Panc1 (cell line): ENCODE measurements at regions of chr4 and their contacts with region 1.

Region 1: DNA sequence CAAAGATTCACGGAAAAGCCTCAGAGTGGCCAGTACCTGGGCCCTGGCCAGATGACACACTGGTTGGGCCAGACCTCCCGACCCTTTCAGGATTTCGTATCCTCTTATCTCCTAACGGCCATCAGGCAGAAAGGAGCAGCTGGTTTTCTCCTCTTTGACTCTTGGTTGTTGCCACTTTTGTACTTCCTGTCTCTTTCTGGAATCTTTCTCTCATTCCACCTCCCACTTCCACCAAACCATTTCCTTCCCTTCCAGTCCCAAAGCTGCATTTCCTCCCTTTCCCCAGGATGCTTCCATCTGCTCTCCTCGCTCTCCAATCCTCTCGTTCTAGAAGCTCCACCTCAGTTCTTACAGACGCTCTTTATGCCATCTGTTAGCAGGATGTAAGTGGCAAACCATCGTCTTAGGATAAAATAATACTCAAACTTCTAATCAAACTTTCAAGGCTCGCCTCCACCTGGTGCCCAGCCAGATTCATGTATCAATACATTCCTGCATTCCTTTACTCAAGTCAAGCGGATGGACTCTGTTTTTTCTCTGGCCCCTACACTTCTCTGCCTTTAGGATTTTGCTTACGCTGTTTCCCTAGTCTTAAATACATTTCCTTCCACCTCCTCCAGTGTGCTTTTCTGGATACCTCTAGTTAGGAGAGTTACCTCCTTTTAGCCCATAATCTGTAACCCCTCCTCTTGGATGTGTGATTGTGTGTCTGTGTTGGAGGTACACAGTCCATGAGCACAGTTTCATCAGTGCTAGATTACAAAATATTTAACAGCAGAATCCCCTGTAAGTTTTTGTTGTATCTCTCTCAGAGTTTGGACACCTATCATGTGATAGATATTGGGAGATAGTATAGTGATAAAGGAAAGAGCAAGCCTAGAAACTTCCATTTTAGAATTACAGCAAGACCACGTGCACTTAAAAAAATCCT is 70.4 kb downstream of the LDB2 start:
- DNase-seq: no peak
- ATAC-seq: no peak
- H3K4me3 ChIP-seq: no peak overlapping the region
- H3K27ac ChIP-seq: no peak overlapping the region
- H3K4me1 ChIP-seq: no peaks in the 10 kb centered on the region
- H3K27me3 ChIP-seq: no peaks in the 10 kb centered on the region
- CTCF ChIP-seq: no peak

Region 2: DNA sequence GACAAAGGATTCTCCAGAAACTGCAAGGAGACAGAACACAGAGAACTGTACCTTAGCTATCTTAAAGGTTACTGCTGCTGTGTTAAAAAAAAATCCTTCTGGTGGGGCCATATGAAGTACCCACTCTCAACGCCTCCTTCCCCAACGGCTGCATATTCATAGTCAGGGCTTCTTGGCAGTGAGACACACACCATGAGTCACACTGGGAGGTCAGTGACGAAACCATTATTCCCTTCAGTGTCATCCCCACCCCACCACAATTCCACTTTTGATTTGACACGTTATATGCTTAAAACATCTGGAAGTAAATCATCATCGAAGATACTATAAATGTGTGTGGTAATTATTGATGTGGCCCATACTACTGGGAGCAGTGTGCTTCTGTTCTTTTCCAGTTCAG is 201.1 kb before region 1 on chr4:
- CTCF ChIA-PET with region 1: no interaction called
- POLR2A ChIA-PET with region 1: interaction called, 16 read pairs
- in situ Hi-C with region 1: no loop called
- intact Hi-C with region 1: no loop called
- DNase-seq: no peak
- ATAC-seq: no peak
- H3K4me3 ChIP-seq: no peak overlapping the region
- H3K27ac ChIP-seq: no peak overlapping the region
- H3K4me1 ChIP-seq: no peaks in the 10 kb centered on the region
- H3K27me3 ChIP-seq: no peaks in the 10 kb centered on the region
- CTCF ChIP-seq: no peak

Region 3: GRCh38 chr4:17356926-17357325 is 528.9 kb after region 1 on chr4:
- CTCF ChIA-PET with region 1: no interaction called
- POLR2A ChIA-PET with region 1: no interaction called
- in situ Hi-C with region 1: no loop called
- intact Hi-C with region 1: no loop called
- DNase-seq: no peak
- ATAC-seq: no peak
- H3K4me3 ChIP-seq: no peak overlapping the region
- H3K27ac ChIP-seq: no peak overlapping the region
- H3K4me1 ChIP-seq: no peaks in the 10 kb centered on the region
- H3K27me3 ChIP-seq: no peaks in the 10 kb centered on the region
- CTCF ChIP-seq: no peak